ENCODE measurements at regions of chr11 and their contacts with region 1.

Region 1: GRCh38 chr11:83019888-83020579 is 51.7 kb downstream of the RAB30 start:
- DNase-seq: peak; percentile 83
- ATAC-seq: peak; percentile 97

Region 2: DNA sequence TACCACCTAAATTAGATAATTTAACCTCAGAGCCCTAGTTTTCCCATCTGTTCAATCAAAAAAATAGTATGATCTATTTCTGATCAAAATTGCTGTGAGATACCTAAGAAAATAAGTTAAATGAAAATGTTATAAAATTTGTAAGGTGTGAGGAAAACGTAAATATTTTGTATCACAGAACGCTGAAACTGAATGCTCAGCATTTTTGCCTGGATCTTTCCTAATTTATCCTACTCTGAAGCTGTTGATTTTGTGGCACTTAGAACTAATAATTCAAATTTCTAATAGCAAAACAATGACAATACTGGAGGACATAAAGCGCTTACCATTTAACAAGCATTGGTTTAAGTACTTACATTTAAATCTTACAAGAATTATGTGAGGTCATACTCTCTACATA is 960.5 kb before region 1 on chr11:
- intact Hi-C with region 1: no loop called
- DNase-seq: no peak
- ATAC-seq: no peak

Region 3: DNA sequence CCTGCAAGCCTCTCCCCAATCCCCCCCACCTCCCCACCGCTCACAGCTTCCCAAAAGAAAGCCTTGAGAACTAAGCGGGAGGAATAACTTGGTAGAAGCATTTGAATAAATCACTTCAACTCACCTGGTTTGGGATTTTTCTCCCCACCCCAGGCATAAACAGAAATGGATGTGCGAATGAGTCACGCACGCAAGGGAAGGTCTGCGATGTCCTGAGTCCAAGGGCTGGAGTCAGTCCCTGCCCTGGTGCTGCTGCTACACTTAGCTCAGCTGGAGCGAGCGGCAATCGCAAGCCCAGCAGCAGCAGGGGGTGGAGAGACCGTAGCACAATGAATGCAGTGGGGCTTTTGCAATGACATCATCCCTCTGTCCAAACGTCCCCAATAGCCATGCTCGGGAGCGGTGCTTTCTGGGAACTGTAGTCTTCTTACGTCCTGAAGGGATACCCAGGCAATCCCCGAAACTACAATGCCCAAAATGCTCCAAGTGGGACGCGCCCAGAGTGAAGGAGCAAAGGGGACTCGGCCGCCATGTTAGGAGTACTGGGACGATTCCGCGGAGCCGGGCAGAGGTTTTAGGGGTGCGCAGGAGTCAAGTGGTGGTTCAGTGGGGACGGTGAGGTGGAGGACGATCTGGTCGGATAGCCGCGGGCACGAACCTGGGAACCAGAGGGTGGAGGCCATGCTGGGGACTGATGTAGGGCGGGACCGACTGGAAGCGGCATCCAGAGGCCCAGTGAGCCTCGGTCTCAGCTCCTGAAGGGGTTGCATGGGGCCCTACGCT is 51.7 kb after region 1 on chr11 and contains the start of gene RAB30:
- intact Hi-C with region 1: loop called (anchors 10 kb)
- DNase-seq: peak; percentile 94
- ATAC-seq: peak; percentile 97
- total RNA-seq, gene RAB30: 31.3 TPM

Region 4: GRCh38 chr11:83241291-83241946 is 221.4 kb after region 1 on chr11:
- intact Hi-C with region 1: no loop called
- DNase-seq: no peak
- ATAC-seq: peak; percentile 75